Activated CD8-positive, alpha-beta T cell treated with anti-CD3 and anti-CD28 coated beads, Interleukin-2, amount 10 ng/mL, durations not matched to agents 7 days and 5 days (primary cell): ENCODE measurements at regions of chr1 and their contacts with region 1.

Region 1: DNA sequence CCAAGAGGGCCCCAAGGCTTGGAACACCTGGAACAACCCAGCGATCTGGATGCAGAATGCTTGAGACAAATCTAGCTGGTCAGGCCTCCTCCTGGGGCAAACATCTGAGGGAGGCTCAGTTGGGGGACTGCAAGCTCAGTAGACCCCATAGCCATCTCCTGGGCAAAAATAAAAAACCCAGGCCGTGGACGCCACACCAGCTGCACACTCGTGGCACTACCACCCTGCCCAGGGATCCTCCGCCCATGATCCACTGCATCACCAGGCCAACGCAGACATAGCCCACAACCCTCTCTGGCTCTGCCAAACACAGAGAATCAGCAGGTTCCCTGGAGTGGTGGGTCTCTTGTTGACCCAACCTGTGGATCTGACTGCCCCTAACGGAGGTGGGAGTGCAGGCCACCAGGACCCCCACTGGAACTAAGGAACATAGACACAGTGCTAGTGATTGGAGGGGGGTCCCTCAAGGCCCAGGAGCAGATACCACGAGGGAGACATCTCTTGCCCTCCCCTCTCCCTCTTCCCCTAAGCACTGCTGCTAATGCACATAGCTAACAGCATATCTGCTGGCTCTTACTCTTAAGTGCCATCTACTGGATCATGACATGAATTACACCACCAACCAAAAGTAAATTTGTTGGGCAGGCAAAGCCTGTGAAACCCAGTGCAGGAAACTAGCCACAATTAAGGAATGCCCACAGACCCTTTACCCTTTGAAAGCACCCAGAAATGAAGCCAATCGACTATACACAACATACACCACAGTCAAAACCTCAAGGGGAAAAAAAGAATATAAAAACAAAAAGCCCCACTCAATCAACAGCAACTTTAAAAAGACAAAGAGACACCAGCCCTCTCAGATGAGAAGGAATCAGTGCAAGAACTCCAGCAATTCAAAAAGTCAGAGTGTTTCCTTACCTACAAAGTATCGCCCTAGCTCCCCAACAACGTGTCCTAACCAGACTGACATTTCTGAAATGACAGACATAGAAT is 147.3 kb downstream of the CHD1L start:
- DNase-seq: peak; percentile 24
- ATAC-seq: peak; percentile 63
- H3K4me3 Mint-ChIP-seq: no peak overlapping the region
- H3K27ac Mint-ChIP-seq: no peak overlapping the region
- H3K4me1 Mint-ChIP-seq: no peaks in the 10 kb centered on the region
- H3K27me3 Mint-ChIP-seq: peaks cover 14% of the 10 kb centered on the region

Region 2: DNA sequence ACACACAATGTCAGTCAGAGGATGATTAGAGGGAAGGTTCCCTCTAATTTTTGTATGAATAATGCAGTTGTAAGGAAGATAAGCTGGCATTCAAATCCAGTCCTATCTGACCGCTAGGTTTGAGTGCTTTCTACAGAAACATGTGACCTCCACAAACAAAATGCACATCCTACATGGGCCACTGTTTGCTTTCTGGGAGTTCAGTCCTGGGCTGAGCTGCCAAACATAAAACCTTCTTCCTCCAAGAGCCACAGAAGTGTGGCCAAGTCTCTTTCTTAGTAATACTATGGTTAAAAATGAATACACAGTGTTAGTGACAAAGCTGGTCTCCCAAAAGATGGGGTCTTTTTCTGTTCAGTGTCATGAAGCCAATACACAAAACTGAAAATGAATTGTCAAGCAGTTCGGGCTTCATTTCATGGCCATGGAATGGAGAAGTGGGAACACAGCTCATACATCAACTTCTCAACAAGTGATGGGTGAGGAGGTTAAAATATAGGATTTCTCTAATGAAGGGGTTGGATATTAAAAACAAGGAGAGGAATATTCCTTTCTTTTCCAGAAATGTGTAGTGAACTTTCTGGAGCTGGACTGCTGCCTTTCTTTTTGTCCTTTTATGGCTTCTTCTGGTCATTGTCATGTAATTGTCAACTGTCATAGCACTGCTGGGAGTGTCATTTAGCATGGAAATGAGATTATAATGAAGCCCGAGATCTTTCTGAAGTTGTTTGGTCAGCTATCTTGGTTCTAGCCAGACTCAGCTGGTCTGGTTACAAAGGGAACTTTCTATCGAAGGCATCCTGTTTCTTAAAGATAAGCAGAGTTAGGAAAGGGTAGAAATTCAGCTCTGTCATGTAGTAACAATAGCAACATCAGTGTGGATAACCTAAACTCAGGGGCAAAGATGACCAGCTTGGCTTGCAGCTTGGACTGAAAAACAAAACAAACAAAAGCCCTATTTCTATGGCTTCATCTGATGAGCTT is 12.3 kb before region 1 on chr1:
- CTCF ChIA-PET with region 1: interaction called, 10 read pairs
- POLR2A ChIA-PET with region 1: no interaction called
- DNase-seq: no peak
- ATAC-seq: no peak
- H3K4me3 Mint-ChIP-seq: no peak overlapping the region
- H3K27ac Mint-ChIP-seq: no peak overlapping the region
- H3K4me1 Mint-ChIP-seq: no peaks in the 10 kb centered on the region
- H3K27me3 Mint-ChIP-seq: peaks cover 9% of the 10 kb centered on the region

Region 3: DNA sequence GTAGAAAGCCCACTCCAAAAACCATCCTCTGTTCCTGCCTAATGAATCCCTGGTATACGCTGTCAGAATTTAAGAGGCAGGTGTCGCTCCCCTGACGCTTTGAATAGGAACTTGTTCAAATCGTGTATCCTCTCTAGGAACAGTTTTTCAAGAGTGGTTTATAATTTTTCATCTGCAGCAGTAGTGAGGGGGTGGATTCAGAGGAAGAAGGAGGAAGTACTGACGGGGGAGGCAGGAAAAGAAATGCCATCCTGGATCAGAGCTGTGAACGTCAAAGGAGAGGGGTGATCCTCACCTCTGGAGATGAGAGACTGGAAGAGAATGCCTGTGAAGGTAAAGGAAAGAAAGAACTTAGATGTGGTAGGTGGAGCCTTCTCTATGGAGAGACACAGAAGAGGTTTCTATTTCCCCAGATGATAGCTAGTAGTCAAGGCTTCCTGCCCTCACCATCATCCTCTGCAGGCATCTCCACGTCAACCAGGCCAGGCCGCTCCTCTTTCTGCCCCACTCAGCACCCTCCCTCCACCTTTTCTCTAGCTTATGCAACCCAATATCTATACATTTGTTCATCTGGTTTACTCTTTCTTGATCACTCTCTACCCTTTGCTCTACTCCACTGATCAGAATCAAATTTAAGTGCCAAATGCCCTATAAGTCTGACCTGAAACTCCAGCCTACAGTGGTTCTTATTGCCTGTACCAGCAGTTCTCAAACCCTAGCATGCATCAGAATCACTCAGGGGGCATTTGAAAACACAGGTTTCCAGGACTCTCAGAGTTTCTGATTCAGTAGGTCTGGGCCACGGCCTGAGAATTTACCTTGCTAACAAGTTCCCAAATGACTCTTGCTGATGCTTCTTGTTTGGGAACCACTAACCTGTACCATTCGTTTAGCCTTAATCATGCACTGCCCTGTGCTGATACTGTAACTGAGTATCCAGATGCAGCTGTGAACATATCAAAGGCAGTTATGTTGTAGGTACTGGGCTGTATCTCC is 138.4 kb after region 1 on chr1:
- CTCF ChIA-PET with region 1: no interaction called
- POLR2A ChIA-PET with region 1: no interaction called
- DNase-seq: peak; percentile 36
- ATAC-seq: peak; percentile 71
- H3K4me3 Mint-ChIP-seq: no peak overlapping the region
- H3K27ac Mint-ChIP-seq: no peak overlapping the region
- H3K4me1 Mint-ChIP-seq: no peaks in the 10 kb centered on the region
- H3K27me3 Mint-ChIP-seq: peaks cover 2% of the 10 kb centered on the region